Adrenal gland (tissue), 19 donors: ENCODE measurements at regions of chr20 and their contacts with region 1.

Region 1: GRCh38 chr20:3051385-3052019 is 5.7 kb downstream of the MRPS26 start:
- DNase-seq: no peak
- H3K4me3 ChIP-seq: no peak overlapping the region
- H3K27ac ChIP-seq: no peak overlapping the region
- H3K4me1 ChIP-seq: peaks cover 0 to 15% of the 10 kb centered on the region in 2 donors
- H3K27me3 ChIP-seq: no peaks in the 10 kb centered on the region
- CTCF ChIP-seq: no peak
- POLR2A ChIP-seq: no peak

Region 2: DNA sequence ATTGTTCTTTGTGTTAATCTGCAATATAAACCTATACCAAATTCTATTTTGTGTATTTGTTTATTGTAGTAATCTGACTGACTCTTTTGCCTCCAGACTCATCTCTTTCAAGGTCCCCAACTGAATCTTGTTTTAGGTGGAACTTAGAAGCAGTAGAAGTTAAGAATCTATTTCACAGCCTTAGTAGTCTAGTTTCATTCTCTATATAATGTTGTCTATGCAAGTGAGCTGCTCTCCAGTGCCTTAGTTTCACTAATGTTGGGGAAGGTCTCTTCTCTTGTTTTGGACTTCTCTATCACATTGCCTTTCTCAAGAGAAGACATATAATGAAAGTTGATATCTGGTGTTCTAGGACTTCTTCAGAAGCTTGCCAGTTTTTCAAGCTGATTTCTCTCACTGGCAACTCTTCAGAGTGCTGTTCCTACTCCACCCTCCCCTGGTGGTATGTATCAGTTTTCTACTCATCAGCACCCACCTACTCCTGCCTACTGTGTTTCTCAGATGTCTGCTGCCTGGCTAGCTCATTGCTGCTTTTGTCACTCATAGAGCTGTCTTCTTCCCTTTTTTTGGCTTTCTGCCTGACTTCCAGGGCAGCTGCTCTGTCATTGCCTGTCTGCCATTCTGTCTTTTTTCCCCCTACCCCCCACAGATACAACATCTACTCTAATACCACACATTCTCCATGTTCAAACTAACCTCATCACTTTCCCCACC is 96.1 kb before region 1 on chr20:
- intact Hi-C with region 1: no loop called
- DNase-seq: no peak
- H3K4me3 ChIP-seq: no peak overlapping the region
- H3K27ac ChIP-seq: no peak overlapping the region
- H3K4me1 ChIP-seq: no peaks in the 10 kb centered on the region
- H3K27me3 ChIP-seq: no peaks in the 10 kb centered on the region
- CTCF ChIP-seq: no peak
- POLR2A ChIP-seq: no peak

Region 3: DNA sequence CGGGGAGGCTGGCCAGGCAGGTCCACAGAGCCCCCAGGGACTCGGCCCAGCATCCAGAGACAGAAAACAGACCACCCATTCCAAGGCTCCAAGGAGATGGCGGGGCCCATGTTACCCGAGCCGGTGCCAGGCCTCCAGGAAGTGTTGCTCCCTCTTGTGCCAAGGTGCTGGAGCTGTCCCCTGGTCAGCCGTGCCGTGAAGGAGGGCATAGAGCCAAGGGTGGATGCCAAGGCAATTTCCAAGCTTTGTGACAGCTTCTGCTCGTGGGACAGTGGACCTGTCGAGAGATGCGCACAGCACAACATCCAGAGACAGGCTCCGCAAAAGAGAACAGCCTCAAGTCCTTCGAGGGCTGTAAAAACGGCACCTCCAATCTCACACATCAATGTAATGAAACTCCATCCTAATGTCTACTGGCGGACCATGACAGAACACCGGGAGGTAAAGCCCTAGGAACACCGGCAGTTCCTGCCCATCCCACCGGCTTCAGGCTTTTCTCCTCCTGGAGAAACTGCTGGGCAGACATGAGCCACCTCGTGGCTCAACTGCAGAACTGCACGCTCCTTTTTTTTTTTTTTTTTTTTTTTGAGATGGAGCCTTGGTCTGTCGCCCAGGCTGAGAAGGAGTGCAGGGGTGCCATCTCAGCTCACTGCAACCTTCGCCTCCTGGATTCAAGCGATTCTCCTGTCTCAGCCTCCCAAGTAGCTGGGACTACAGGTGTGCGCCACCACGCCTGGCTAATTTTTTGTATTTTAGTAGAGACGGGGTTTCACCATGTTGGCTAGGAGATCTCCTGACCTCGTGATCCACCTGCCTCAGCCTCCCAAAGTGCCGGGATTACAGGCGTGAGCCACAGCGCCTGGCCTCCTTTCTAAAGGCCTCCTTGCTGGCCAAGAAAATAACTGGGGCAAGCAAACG is 63.9 kb after region 1 on chr20:
- intact Hi-C with region 1: loop called (anchors 5 to 10 kb)
- DNase-seq: peak in 6 of 7 donors; percentile 47 to 67 (median 66)
- H3K4me3 ChIP-seq: no peak overlapping the region
- H3K27ac ChIP-seq: peak overlapping the region; percentile 10 to 94 (median 90)
- H3K4me1 ChIP-seq: peaks cover 23 to 33% of the 10 kb centered on the region in 2 donors
- H3K27me3 ChIP-seq: no peaks in the 10 kb centered on the region
- CTCF ChIP-seq: peak; percentile 55 to 89 (median 80)
- POLR2A ChIP-seq: no peak